CD8-positive, alpha-beta T cell (primary cell): ENCODE measurements at regions of chr10 and their contacts with region 1.

Region 1: DNA sequence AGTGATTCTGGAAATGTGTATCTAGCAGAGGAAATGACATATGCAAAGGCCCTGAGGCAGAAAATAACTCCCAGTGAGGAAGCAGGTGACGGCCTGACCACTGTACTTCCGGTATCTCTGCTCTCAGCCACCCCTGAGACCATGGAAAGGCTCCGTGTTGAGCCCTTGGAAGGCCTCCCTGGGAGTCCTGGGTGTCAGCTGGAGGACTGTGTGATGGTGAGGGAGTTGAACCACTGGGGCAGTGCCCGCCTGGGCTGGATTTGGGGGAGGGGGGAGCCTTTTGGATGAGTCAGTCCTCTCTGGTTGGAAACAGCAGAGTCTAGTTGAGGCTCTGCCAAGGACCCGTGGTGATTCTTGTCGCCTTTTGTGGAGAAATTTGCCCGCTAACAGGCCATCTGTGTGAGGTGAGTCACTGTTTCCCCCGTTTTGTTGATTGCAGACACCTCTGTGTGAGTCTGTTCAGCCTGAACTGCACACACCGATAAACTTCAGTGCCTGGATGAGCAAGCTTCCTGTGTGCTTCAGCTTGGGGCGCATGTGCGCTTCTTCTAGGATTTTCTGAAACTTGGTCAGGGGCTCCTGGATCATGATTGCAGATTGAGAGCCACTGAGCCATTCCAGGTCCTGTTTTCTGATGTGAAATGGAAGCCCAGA is 98.6 kb downstream of the GRK5 start:
- DNase-seq: peak; percentile 49 to 94 (median 86)
- ATAC-seq: peak; percentile 79
- H3K4me3 ChIP-seq: peak overlapping the region; percentile 50 to 57
- H3K4me3 Mint-ChIP-seq: peak overlapping the region; percentile 89
- H3K27ac ChIP-seq: peak overlapping the region; percentile 63 to 90
- H3K27ac Mint-ChIP-seq: peak overlapping the region; percentile 97
- H3K4me1 ChIP-seq: peaks cover 57% of the 10 kb centered on the region
- H3K4me1 Mint-ChIP-seq: peaks cover 67% of the 10 kb centered on the region
- H3K27me3 ChIP-seq: peaks cover 0 to 3% of the 10 kb centered on the region in 2 experiments
- H3K27me3 Mint-ChIP-seq: no peaks in the 10 kb centered on the region
- CTCF ChIP-seq: no peak

Region 2: DNA sequence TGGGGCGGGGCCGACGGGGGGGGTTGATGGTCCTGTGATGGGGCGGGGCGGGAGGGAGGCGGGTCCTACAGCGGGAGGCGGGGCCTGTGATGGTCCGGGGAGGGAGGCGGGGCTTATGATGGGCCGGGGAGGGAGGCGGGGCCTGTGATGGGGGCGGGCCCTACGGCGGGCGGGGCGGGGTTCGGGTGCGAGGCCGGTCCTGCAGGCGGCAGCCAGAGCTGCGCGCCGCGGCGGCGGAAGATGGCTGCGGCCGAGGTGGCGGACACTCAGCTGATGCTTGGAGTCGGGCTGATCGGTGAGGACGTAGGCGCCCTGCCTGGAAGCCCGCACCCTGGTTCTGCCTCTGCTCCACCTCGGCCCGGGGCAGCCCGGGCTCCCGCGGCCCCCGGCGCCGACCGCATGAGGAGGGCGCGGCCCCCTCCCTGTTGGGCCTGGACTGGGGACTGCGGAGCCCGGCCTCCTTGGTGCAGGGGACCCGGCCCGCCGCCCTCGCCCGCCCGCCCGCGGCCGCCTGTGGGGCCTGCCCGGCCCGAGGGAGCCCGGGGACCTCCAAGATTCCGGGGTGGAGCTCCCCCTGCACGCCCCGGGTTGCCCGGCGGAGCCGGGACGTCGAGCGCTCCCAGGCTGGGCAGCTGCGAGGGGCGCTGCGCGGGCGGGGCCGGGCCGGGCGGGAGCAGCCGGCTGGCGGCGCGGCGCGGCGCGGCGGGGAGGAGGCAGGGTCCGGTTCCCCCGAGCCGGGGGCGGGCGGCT is 201.9 kb before region 1 on chr10 and contains the start of gene DENND10:
- CTCF ChIA-PET with region 1: no interaction called
- POLR2A ChIA-PET with region 1: no interaction called
- intact Hi-C with region 1: loop called in 1 of 2 experiments (anchors 1 kb)
- DNase-seq: peak; percentile 55 to 88 (median 78)
- ATAC-seq: peak; percentile 85
- H3K4me3 ChIP-seq: peak within 1 kb of the TSS; percentile 46 to 49
- H3K4me3 Mint-ChIP-seq: peak within 1 kb of the TSS; percentile 90
- H3K27ac ChIP-seq: peak within 1 kb of the TSS; percentile 37 to 59
- H3K27ac Mint-ChIP-seq: peak within 1 kb of the TSS; percentile 93
- H3K4me1 ChIP-seq: peaks cover 4% of the 10 kb centered on the region
- H3K4me1 Mint-ChIP-seq: peaks cover 20% of the 10 kb centered on the region
- H3K27me3 ChIP-seq: no peaks in the 10 kb centered on the region
- H3K27me3 Mint-ChIP-seq: no peaks in the 10 kb centered on the region
- CTCF ChIP-seq: no peak
- total RNA-seq, gene DENND10: 28.8 to 30.5 TPM

Region 3: GRCh38 chr10:119268871-119269506 is 37.0 kb before region 1 on chr10:
- CTCF ChIA-PET with region 1: interaction called, 7 read pairs
- POLR2A ChIA-PET with region 1: interaction called, 12 read pairs
- intact Hi-C with region 1: loop called (anchors 1 kb)
- DNase-seq: peak; percentile 45 to 97 (median 75)
- ATAC-seq: peak; percentile 90
- H3K4me3 ChIP-seq: no peak overlapping the region
- H3K4me3 Mint-ChIP-seq: peak overlapping the region; percentile 33
- H3K27ac ChIP-seq: peak overlapping the region; percentile 68 to 100
- H3K27ac Mint-ChIP-seq: peak overlapping the region; percentile 97
- H3K4me1 ChIP-seq: peaks cover 42% of the 10 kb centered on the region
- H3K4me1 Mint-ChIP-seq: peaks cover 52% of the 10 kb centered on the region
- H3K27me3 ChIP-seq: no peaks in the 10 kb centered on the region
- H3K27me3 Mint-ChIP-seq: no peaks in the 10 kb centered on the region
- CTCF ChIP-seq: no peak

Region 4: GRCh38 chr10:119289227-119289920 is 16.6 kb before region 1 on chr10:
- CTCF ChIA-PET with region 1: interaction called, 14 read pairs
- POLR2A ChIA-PET with region 1: interaction called, 8 read pairs
- intact Hi-C with region 1: loop called in 1 of 2 experiments (anchors 2 kb)
- DNase-seq: no peak
- ATAC-seq: no peak
- H3K4me3 ChIP-seq: no peak overlapping the region
- H3K4me3 Mint-ChIP-seq: peak overlapping the region; percentile 59
- H3K27ac ChIP-seq: no peak overlapping the region
- H3K27ac Mint-ChIP-seq: peak overlapping the region; percentile 85
- H3K4me1 ChIP-seq: peaks cover 79% of the 10 kb centered on the region
- H3K4me1 Mint-ChIP-seq: peaks cover 80% of the 10 kb centered on the region
- H3K27me3 ChIP-seq: peaks cover 0 to 3% of the 10 kb centered on the region in 2 experiments
- H3K27me3 Mint-ChIP-seq: no peaks in the 10 kb centered on the region
- CTCF ChIP-seq: no peak

Region 5: DNA sequence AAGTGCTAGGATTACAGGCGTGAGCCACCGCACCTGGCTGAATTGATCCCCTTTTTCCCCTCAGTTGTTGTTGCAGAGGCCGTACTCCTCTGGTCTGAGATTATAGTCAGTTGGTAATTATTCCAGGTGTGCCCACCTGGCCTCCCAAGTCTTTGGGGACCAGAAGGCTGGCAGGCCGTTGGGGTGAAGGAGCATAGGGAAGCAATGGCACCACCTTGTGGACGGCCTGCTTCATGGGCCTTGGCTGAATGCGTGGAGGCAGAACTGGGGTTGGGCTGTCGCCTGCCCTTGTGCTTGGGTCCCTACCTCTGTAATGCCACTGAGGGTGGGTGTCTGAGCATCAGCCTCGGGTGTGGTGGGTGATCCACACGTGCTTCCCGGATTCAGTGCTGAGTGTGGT is 110.9 kb after region 1 on chr10:
- CTCF ChIA-PET with region 1: interaction called, 6 read pairs
- POLR2A ChIA-PET with region 1: no interaction called
- intact Hi-C with region 1: loop called in 1 of 2 experiments (anchors 2 kb)
- DNase-seq: peak; percentile 45 to 83 (median 73)
- ATAC-seq: peak; percentile 86
- H3K4me3 ChIP-seq: no peak overlapping the region
- H3K4me3 Mint-ChIP-seq: no peak overlapping the region
- H3K27ac ChIP-seq: no peak overlapping the region
- H3K27ac Mint-ChIP-seq: no peak overlapping the region
- H3K4me1 ChIP-seq: no peaks in the 10 kb centered on the region
- H3K4me1 Mint-ChIP-seq: peaks cover 2% of the 10 kb centered on the region
- H3K27me3 ChIP-seq: no peaks in the 10 kb centered on the region
- H3K27me3 Mint-ChIP-seq: no peaks in the 10 kb centered on the region
- CTCF ChIP-seq: peak; percentile 60

Region 6: DNA sequence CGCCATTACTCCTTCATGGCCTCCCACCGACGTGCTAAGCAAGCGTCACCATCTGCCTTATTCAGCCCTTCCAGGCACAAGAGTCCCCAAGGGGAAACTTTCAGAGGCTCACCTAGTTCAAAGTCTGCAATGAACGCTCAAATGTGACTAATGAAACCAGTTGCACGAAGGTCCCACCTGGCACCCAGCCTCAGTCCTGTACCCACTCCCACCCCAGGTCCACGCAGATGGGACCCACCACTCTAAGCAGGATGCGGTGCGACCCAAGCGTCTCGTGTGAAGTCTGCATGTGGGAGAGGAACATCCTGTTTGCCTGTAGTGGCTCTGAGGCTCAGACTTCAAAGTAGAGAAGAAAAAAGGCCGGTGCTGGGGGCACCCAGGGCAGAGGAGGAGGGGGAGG is 196.2 kb after region 1 on chr10:
- CTCF ChIA-PET with region 1: no interaction called
- POLR2A ChIA-PET with region 1: no interaction called
- intact Hi-C with region 1: loop called in 1 of 2 experiments (anchors 5 kb)
- DNase-seq: peak; percentile 64 to 97 (median 88)
- ATAC-seq: peak; percentile 82
- H3K4me3 ChIP-seq: peak overlapping the region; percentile 0 to 18
- H3K4me3 Mint-ChIP-seq: peak overlapping the region; percentile 79
- H3K27ac ChIP-seq: peak overlapping the region; percentile 73 to 77
- H3K27ac Mint-ChIP-seq: peak overlapping the region; percentile 99
- H3K4me1 ChIP-seq: peaks cover 94% of the 10 kb centered on the region
- H3K4me1 Mint-ChIP-seq: peaks cover 91% of the 10 kb centered on the region
- H3K27me3 ChIP-seq: no peaks in the 10 kb centered on the region
- H3K27me3 Mint-ChIP-seq: no peaks in the 10 kb centered on the region
- CTCF ChIP-seq: no peak